Posterior vena cava (tissue), 2 donors: ENCODE measurements at regions of chr12 and their contacts with region 1.

Region 1: DNA sequence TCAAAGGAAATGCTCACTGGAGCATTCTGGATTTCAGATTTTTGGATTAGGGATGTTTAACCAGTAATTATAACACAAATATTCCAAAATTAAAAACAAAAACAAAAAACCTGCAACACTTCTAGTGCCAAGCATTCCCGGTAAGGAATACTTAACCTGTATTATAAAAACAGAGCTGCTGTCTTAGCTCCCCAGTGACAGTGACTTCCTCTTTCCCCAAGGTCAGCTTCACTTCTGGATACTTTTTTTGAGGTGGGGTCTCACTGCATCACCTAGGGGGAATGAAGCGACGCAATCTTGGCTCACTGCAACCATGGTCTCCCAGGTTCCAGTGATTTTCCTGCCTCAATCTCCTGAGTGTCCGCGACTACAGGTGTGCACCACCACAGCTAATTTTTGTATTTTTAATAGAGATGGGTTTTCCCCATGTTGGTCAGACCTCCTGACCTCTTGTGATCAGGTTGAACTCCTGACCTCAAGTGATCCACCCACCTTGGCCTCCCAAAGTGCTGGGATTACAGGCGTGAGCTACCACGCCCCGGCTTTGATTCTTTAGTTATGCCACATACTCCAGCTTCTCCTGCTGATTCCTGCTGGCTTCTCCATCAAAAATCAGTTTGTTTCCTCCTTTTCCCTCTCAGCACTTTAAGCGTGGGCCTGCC is 15.9 kb downstream of the PPP1CC start:
- DNase-seq: no peak

Region 2: DNA sequence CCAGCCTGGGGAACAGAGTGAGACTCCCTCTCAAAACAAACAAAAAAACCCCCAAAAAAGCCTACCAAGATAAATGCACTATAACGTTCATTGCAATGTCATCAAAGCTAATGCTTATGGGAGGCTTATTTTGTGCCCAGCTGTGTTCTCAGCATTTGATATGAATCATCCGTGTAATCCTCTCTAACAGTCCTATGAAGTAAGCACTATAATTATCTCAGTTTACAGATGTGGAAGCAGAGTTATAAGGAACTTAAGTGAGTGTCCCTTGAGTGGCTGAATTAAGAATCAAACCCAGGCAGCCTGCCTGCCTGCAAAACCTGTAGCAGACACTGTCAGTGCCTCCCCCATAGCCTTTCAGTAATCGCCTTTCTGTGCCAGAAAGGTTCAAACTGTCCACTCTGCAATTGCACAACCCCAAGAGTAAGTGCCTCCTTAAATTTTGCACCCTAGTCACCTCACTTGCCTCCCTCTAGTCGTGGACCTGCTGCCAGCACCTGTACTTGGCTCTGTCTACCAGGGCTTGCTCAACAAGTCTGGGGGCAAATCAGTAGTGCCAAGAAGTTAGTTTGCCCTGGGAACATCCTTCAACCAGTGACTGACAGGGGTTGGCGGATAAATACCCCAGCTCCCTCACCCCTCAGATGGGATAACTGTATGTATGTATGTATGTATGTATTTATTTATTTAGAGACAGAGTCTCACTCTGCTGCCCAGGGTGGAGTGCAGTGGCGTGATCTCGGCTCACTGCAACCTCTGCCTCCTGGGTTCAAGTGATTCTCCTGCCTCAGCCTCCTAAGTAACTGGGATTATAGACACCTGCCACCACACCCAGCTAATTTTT is 39.7 kb after region 1 on chr12:
- intact Hi-C with region 1: no loop called
- DNase-seq: no peak

Region 3: GRCh38 chr12:110896559-110896958 is 169.7 kb after region 1 on chr12:
- intact Hi-C with region 1: no loop called
- DNase-seq: no peak

Region 4: GRCh38 chr12:111868676-111869588 is 1142.1 kb after region 1 on chr12:
- intact Hi-C with region 1: loop called in 1 of 2 experiments (anchors 5 kb)
- DNase-seq: no peak